ENCODE measurements at regions of chr5 and their contacts with region 1.

Region 1: GRCh38 chr5:139633295-139634027 is 14.7 kb upstream of the CXXC5 start:
- DNase-seq: peak; percentile 59 to 68
- H3K4me3 ChIP-seq: no peak overlapping the region
- H3K27ac ChIP-seq: no peak overlapping the region
- H3K4me1 ChIP-seq: peaks cover 27 to 38% of the 10 kb centered on the region in 2 donors
- H3K27me3 ChIP-seq: no peaks in the 10 kb centered on the region
- CTCF ChIP-seq: peak; percentile 89 to 100 (median 97)
- POLR2A ChIP-seq: no peak

Region 2: GRCh38 chr5:139651853-139652787 is 18.7 kb after region 1 on chr5:
- intact Hi-C with region 1: loop called (anchors 2 kb)
- DNase-seq: peak; percentile 86 to 89
- H3K4me3 ChIP-seq: no peak overlapping the region
- H3K27ac ChIP-seq: peak overlapping the region; percentile 95 to 99 (median 95)
- H3K4me1 ChIP-seq: peaks cover 75% of the 10 kb centered on the region in 2 donors
- H3K27me3 ChIP-seq: no peaks in the 10 kb centered on the region
- CTCF ChIP-seq: no peak
- POLR2A ChIP-seq: peak in 1 of 2 donors; percentile 27

Region 3: DNA sequence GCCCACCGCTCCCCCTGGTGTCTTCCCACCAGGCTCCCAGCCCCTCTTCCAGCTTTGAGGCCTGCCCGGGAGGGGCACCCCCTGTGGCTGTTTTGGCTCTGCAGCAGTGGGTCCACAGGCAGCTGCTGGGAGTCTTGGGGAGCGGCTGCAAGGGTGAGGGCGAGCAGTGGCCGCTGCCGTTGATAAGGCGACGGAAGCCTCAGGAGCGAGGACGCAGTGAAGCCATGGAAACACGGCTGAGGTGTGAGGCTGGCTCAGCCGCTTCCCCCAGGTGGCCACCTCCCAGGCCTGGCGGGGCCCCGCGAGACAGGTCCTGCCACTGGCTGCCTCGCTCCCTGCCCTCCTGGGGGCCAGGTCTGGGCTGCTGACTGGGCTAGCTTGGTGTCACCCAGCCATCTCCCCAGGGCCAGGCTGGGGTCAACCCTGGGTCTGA is 56.2 kb after region 1 on chr5:
- intact Hi-C with region 1: loop called (anchors 5 kb)
- DNase-seq: no peak
- H3K4me3 ChIP-seq: no peak overlapping the region
- H3K27ac ChIP-seq: peak overlapping the region in 2 of 3 donors; percentile 65 to 74
- H3K4me1 ChIP-seq: peaks cover 34 to 58% of the 10 kb centered on the region in 2 donors
- H3K27me3 ChIP-seq: no peaks in the 10 kb centered on the region
- CTCF ChIP-seq: no peak
- POLR2A ChIP-seq: no peak

Measured in thyroid gland (tissue), 4 donors.